ENCODE measurements at regions of chr14 and their contacts with region 1.

Region 1: DNA sequence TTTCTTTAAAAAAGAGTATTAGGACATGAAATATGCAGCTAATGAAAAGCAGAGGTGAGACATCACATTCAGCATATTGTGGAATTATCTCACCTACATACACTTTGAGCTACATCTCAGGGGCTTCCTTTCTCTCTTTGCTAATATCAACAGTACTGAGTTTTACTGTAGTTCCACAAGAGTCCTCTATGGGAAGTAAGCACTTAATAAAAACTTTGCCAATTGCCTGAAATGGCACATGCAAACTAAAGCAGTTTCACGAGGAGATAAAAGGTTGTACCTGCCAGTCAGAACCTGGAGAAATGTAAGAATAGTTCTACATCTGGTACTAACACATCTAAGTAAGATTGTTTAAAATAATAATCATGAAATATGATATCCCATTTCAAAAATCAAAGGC is 73.5 kb upstream of the GPHB5 start:
- DNase-seq: no peak
- H3K4me3 ChIP-seq: no peak overlapping the region
- H3K27ac ChIP-seq: no peak overlapping the region
- H3K4me1 ChIP-seq: no peaks in the 10 kb centered on the region
- H3K27me3 ChIP-seq: no peaks in the 10 kb centered on the region
- CTCF ChIP-seq: no peak
- POLR2A ChIP-seq: no peak

Region 2: DNA sequence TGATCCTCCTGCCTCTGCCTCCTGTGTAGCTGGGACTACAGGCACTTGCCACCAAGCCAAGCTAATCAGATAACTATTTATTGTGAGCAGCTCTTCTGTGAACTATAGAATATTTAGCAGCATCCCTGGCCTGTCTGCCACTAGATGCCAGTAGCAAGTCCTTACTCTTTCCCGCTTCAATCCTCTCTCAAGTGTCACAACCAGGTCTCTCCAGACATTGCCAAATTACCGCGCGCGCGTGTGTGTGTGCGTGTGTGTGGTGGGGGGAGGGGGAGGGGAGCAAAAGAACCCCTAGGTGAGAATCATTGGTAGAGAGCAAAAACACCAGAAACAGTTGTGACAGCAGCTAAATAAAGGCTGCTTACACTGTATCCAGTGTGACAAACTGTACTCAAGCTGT is 101.0 kb after region 1 on chr14:
- intact Hi-C with region 1: no loop called
- DNase-seq: no peak
- H3K4me3 ChIP-seq: no peak overlapping the region
- H3K27ac ChIP-seq: peak overlapping the region in 1 of 8 donors; percentile 32
- H3K4me1 ChIP-seq: peaks cover 0 to 63% (median 9%) of the 10 kb centered on the region in 6 donors
- H3K27me3 ChIP-seq: no peaks in the 10 kb centered on the region
- CTCF ChIP-seq: no peak
- POLR2A ChIP-seq: no peak

Region 3: DNA sequence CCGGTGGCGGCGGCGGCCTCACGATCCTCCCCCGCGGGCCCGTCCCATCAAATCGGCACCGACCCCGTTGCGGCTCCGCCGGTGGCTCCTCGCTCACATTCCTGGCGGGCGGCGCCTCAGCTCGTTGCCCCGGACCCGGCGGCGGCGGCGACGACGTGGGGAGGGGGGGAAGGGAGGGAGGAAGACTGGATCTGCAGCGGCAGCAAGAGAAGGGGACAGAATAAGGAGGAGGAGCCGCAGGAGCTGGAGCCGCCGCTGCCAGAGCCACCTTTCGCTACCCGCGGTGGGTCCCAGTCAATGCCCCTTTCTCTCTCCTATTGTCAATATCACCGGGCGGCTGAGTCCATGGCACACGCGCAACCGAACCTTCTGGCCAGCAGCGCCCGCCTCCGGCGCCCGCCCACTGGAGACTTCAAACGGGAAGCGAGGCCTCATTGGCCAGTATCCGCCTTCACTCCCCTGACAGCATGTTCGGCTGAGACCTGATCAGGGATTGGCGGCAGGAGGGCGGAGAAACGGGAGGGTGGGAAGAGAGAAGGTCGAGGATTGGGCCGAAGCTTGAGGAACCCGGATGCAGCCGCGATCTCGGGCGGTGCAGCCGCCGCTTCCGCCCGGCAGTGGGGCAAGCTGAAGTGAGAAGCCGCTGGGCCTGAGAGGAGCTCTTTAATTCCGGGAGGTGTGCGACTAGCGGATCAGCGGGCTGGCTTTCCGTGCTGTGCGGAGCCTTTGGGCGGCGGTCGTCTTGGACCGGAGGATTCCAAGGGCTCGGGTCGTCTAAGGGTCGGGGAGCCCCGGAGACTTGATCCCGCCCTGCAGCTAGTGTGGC is 151.0 kb after region 1 on chr14 and contains the start of gene PPP2R5E:
- intact Hi-C with region 1: loop called (anchors 5 kb)
- DNase-seq: peak; percentile 98
- H3K4me3 ChIP-seq: peak within 1 kb of the TSS; percentile 85 to 98 (median 91)
- H3K27ac ChIP-seq: peak within 1 kb of the TSS; percentile 88 to 95 (median 90)
- H3K4me1 ChIP-seq: peaks cover 7 to 42% (median 30%) of the 10 kb centered on the region in 6 donors
- H3K27me3 ChIP-seq: no peaks in the 10 kb centered on the region
- CTCF ChIP-seq: peak in 4 of 11 experiments; percentile 2 to 50 (median 48)
- POLR2A ChIP-seq: peak in 2 of 3 donors; percentile 63 to 82
- total RNA-seq, gene PPP2R5E: 27.2 to 42.3 (median 38.5) TPM

Region 4: GRCh38 chr14:63632932-63633514 is 240.8 kb after region 1 on chr14:
- intact Hi-C with region 1: loop called (anchors 10 kb)
- DNase-seq: no peak
- H3K4me3 ChIP-seq: no peak overlapping the region
- H3K27ac ChIP-seq: no peak overlapping the region
- H3K4me1 ChIP-seq: peaks cover 0 to 37% (median 12%) of the 10 kb centered on the region in 6 donors
- H3K27me3 ChIP-seq: no peaks in the 10 kb centered on the region
- CTCF ChIP-seq: peak in 10 of 11 experiments; percentile 31 to 73 (median 56)
- POLR2A ChIP-seq: no peak

Region 5: DNA sequence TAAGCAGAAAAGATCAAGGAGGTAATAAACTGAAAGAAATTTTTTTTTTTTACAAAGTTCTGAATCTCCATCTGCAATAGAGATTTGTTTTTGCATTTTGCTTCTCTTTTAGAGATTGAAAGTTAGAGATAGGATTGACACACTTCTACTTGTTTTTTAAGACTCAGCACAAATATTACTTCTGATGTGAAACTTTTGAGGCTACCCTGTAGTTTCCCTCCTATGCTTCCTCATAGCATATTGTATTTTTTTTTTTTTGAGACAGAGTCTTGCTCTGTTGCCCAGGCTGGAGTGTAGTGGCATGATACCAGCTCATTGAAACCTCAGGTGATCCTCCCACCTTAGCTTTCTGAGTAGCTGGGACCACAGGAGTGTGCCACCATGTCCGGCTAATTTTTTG is 367.8 kb after region 1 on chr14:
- intact Hi-C with region 1: loop called (anchors 10 kb)
- DNase-seq: no peak
- H3K4me3 ChIP-seq: no peak overlapping the region
- H3K27ac ChIP-seq: peak overlapping the region; percentile 11 to 85 (median 76)
- H3K4me1 ChIP-seq: peaks cover 0 to 33% (median 17%) of the 10 kb centered on the region in 6 donors
- H3K27me3 ChIP-seq: no peaks in the 10 kb centered on the region
- CTCF ChIP-seq: no peak
- POLR2A ChIP-seq: no peak

Measured in spleen (tissue), 13 donors.